Vagina (tissue), 2 donors: ENCODE measurements at regions of chr5 and their contacts with region 1.

Region 1: GRCh38 chr5:59640411-59640810 is 253.1 kb downstream of the PDE4D start:
- DNase-seq: no peak
- H3K4me3 ChIP-seq: no peak overlapping the region
- H3K27ac ChIP-seq: no peak overlapping the region
- H3K4me1 ChIP-seq: no peaks in the 10 kb centered on the region
- H3K27me3 ChIP-seq: no peaks in the 10 kb centered on the region
- CTCF ChIP-seq: no peak
- POLR2A ChIP-seq: no peak

Region 2: DNA sequence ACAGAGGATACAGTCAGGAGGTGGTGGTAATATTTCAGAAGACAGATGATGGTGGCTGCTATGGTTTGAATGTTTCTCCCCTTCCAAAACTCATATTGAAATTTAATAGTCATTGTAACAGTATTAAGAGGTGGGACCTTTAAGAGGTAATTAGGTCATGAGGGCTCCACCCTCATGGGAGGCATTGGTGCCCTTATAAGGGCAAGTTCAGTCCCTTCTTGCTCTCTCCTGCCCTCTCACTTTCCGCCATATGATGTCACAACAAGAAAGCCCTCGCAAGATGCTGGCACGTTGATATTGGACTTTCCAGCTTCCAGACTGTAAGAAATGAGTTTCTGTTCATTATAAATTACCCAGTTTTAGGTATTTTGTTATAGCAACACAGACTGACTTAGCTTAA is 21.8 kb before region 1 on chr5:
- intact Hi-C with region 1: loop called (anchors 1 kb)
- DNase-seq: no peak
- H3K4me3 ChIP-seq: no peak overlapping the region
- H3K27ac ChIP-seq: no peak overlapping the region
- H3K4me1 ChIP-seq: no peaks in the 10 kb centered on the region
- H3K27me3 ChIP-seq: no peaks in the 10 kb centered on the region
- CTCF ChIP-seq: no peak
- POLR2A ChIP-seq: no peak

Region 3: GRCh38 chr5:59905188-59905587 is 264.8 kb after region 1 on chr5:
- intact Hi-C with region 1: no loop called
- DNase-seq: no peak
- H3K4me3 ChIP-seq: no peak overlapping the region
- H3K27ac ChIP-seq: no peak overlapping the region
- H3K4me1 ChIP-seq: no peaks in the 10 kb centered on the region
- H3K27me3 ChIP-seq: no peaks in the 10 kb centered on the region
- CTCF ChIP-seq: no peak
- POLR2A ChIP-seq: no peak